ENCODE measurements at regions of chr11 and their contacts with region 1.

Region 1: DNA sequence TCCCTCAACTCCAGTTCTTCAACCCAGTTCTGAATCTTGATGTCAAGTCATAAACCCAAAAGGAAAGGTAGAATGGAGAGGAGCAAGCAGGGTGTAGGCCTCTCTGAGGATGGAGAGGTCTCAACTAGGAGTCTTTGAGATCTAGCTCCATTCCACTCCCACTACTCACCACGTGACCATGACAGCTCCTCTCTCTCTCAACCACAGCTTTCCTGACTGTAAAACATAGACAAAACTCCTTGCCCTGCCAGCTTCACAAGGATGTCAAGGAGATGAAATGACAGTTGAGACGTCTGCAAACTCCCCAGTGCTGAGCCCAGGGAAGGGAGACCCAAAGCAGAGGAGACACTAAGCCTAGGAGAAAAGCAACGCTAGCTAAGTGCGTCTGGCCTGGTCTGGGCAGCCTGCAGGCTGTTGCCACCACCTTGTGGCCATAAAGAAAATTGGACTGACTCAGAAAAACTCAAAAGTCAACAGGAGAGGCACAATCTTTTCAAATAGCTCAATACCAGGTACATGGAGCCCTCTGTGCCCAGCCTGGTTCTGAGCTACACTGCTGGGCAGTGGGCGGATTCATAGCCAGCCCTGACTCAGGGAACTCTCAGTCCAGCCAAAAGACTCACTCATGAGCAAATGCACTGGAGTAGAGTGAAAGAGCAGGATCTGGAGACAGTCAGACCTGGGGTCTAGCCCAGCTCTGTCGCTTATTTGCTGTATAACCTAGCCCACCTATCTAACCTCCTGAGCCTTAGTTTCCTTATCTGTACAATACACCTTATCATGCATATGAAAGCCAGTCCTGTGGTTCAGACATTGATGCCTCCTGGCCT is 3.4 kb downstream of the CLPB start:
- DNase-seq: peak in 8 of 10 donors; percentile 40 to 68 (median 56)
- H3K4me3 ChIP-seq: peak overlapping the region in 17 of 59 donors; percentile 5 to 32 (median 17)
- H3K27ac ChIP-seq: peak overlapping the region in 11 of 59 donors; percentile 11 to 57 (median 25)
- H3K27me3 ChIP-seq: no peaks in the 10 kb centered on the region
- CTCF ChIP-seq: peak; percentile 58 to 92 (median 84)

Region 2: DNA sequence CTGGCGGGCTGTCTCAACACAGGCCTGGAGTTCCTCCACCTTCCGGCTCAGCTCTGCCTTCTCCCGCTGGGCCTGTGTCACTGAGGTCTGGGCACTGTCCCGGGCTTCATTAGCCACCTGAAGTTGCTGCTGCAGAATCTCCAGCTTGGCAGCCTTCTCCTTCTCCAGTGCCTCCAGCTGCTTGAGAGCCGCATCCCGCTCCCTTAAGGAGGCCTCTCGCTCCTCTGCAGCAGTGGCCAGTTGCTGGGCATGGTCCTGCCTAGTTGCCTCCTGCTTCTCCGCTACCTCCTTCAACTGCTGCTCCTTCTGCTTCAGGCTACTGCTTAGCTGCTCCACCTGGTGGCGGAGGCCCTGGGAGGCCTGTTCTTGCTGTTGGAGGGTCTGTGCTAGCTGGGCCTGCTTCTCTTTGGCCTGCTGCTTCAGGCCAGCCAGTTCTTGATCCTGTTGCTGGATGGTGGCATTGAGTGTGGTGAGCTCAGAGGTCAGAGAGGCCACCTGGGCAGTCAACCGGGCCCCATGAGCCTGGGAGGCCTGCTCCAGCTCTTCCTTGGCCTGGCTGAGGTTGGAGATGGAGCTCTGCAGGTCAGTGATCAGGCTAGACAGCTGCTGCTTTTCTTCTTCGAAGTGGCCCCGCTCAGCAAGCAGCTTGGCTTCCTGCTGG is 415.3 kb before region 1 on chr11:
- intact Hi-C with region 1: loop called (anchors 10 kb)
- DNase-seq: peak in 2 of 10 donors; percentile 40 to 45
- H3K4me3 ChIP-seq: no peak overlapping the region
- H3K27ac ChIP-seq: peak overlapping the region in 51 of 59 donors; percentile 13 to 92 (median 84)
- H3K27me3 ChIP-seq: no peaks in the 10 kb centered on the region
- CTCF ChIP-seq: peak in 52 of 56 donors; percentile 13 to 58 (median 42)

Region 3: GRCh38 chr11:72102946-72103753 is 327.8 kb before region 1 on chr11 and contains the start of gene LAMTOR1:
- intact Hi-C with region 1: loop called in 1 of 2 experiments (anchors 5 kb)
- DNase-seq: peak; percentile 97 to 99 (median 99)
- H3K4me3 ChIP-seq: peak within 1 kb of the TSS; percentile 68 to 100 (median 93)
- H3K27ac ChIP-seq: peak within 1 kb of the TSS; percentile 86 to 100 (median 98)
- H3K27me3 ChIP-seq: no peaks in the 10 kb centered on the region
- CTCF ChIP-seq: peak in 47 of 56 donors; percentile 7 to 62 (median 40)
- total RNA-seq, gene LAMTOR1: 54.1 to 105 (median 74.6) TPM

Region 4: GRCh38 chr11:72238040-72238450 is 192.9 kb before region 1 on chr11:
- intact Hi-C with region 1: loop called in 1 of 2 experiments (anchors 5 kb)
- DNase-seq: peak in 1 of 10 donors; percentile 34
- H3K4me3 ChIP-seq: no peak overlapping the region
- H3K27ac ChIP-seq: peak overlapping the region in 1 of 59 donors; percentile 4
- H3K27me3 ChIP-seq: peaks cover 0 to 42% (median 29%) of the 10 kb centered on the region in 45 donors
- CTCF ChIP-seq: peak in 55 of 56 donors; percentile 16 to 73 (median 60)

Region 5: DNA sequence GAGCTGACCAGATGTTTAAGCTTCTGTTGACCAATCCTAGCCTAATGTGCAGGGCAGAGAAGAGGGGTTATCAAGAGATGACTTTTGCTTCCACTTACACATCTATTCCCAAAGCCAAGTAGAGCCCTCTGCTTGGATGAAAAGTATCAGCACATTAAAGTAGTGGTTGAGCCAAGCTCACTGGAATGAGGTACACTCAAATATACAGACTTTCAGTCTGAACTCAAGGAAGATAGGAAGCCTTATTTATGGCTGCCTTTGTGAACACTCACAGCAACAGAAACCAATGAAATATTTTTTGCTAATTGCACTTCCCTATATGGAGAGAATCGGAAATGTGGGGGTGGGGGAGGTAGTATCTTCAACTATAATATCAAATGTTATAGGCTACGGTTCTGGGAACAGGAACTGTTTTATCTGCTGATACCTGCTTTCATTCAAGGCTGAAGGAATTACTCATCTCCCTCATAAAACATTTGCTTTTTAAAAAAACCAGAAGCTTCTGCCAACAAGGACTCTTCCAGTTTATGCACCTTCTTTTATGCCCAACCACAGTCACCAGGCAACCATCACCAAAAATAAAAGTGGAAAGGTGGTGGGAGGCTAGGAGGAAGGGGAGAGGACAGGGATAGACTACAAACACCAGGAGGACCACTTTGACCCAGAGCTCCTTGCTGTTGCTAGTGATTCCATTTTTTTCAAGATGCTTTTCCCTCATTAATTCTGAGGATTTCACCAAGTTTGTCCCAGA is 87.8 kb before region 1 on chr11:
- intact Hi-C with region 1: no loop called
- DNase-seq: no peak
- H3K4me3 ChIP-seq: no peak overlapping the region
- H3K27ac ChIP-seq: no peak overlapping the region
- H3K27me3 ChIP-seq: no peaks in the 10 kb centered on the region
- CTCF ChIP-seq: no peak

Measured in dorsolateral prefrontal cortex (tissue), 120 donors.